Calu3 (cell line): ENCODE measurements at regions of chr3 and their contacts with region 1.

Region 1: DNA sequence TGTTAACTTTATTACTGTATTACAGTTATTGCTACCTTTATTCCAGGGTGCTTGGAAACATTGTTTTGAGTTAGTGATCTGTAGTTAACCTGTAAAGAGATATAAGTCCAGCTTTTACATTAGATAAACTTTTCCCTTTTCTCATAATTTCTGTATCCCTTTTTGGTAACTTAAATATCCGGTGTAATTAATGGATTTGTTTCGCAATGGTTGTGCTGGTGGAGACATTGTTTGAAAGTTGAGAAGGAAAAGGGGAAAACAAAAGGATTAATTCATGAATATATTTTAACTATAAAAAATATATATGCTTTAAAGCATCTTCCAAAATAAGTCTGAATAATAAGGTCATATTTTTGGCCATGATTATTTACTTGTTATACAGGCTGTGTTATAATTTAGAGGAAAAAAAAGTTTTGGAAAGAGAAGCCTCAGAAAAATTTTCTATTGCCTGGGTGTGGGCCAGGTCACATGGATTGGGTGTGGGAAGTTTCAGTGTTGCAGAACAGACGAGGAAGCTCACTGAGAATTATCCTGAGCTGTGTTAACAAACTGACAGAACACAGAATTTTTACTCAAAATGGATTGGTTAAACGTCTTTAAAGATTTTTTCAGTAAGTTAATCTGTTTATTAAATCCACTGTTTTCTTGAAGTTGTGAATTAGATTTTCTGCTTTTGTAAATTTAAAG is 27.7 kb upstream of the IL20RB start:
- DNase-seq: peak; percentile 62
- H3K4me3 Mint-ChIP-seq: peak overlapping the region; percentile 62
- H3K27ac Mint-ChIP-seq: peak overlapping the region; percentile 78
- H3K4me1 Mint-ChIP-seq: peaks cover 59% of the 10 kb centered on the region
- H3K27me3 Mint-ChIP-seq: no peaks in the 10 kb centered on the region
- CTCF ChIP-seq: no peak

Region 2: DNA sequence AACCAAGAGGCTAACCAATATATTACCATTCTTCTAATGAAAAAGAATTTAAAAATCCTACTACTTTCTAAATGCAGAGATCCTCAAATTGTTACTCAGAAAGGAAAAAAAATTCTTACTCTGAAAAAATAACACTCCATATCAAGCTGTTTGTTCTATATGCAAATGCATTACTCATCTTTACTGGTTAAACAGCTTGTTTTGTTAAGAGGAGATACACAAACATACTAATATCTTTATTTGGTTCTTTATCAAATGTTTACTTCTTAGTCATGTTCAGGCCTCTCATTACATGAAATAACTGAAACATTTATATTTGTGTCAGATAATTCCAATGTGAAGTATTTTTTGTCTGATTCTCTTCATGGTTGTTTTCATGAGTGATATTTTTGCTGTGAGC is 533.2 kb before region 1 on chr3:
- CTCF ChIA-PET with region 1: no interaction called
- intact Hi-C with region 1: loop called (anchors 10 kb)
- DNase-seq: no peak
- H3K4me3 Mint-ChIP-seq: no peak overlapping the region
- H3K27ac Mint-ChIP-seq: no peak overlapping the region
- H3K4me1 Mint-ChIP-seq: no peaks in the 10 kb centered on the region
- H3K27me3 Mint-ChIP-seq: no peaks in the 10 kb centered on the region
- CTCF ChIP-seq: no peak

Region 3: GRCh38 chr3:136919799-136920580 is 10.1 kb before region 1 on chr3:
- CTCF ChIA-PET with region 1: interaction called, 10 read pairs
- intact Hi-C with region 1: no loop called
- DNase-seq: no peak
- H3K4me3 Mint-ChIP-seq: no peak overlapping the region
- H3K27ac Mint-ChIP-seq: peak overlapping the region; percentile 64
- H3K4me1 Mint-ChIP-seq: peaks cover 71% of the 10 kb centered on the region
- H3K27me3 Mint-ChIP-seq: no peaks in the 10 kb centered on the region
- CTCF ChIP-seq: no peak